ENCODE measurements at regions of chr7 and their contacts with region 1.

Region 1: GRCh38 chr7:76179686-76180085 is 22.0 kb upstream of the SRRM3 start:
- DNase-seq: no peak
- ATAC-seq: no peak
- H3K4me3 ChIP-seq: no peak overlapping the region
- H3K27ac ChIP-seq: no peak overlapping the region
- H3K4me1 ChIP-seq: no peaks in the 10 kb centered on the region
- H3K27me3 ChIP-seq: no peaks in the 10 kb centered on the region
- CTCF ChIP-seq: no peak

Region 2: GRCh38 chr7:76262683-76263402 is 83.2 kb after region 1 on chr7:
- intact Hi-C with region 1: loop called in 2 of 3 experiments (anchors 5 to 10 kb)
- DNase-seq: peak in 4 of 6 donors; percentile 48 to 66 (median 59)
- ATAC-seq: peak; percentile 73 to 90 (median 88)
- H3K4me3 ChIP-seq: no peak overlapping the region
- H3K27ac ChIP-seq: no peak overlapping the region
- H3K4me1 ChIP-seq: peaks cover 5 to 7% (median 5%) of the 10 kb centered on the region in 3 donors
- H3K27me3 ChIP-seq: peaks cover 0 to 11% (median 0%) of the 10 kb centered on the region in 4 donors
- CTCF ChIP-seq: peak in 3 of 4 donors; percentile 33 to 71 (median 66)

Region 3: GRCh38 chr7:76314042-76314721 is 134.5 kb after region 1 on chr7:
- intact Hi-C with region 1: loop called in 1 of 3 experiments (anchors 10 kb)
- DNase-seq: peak; percentile 93 to 99 (median 97)
- ATAC-seq: peak; percentile 51 to 78 (median 69)
- H3K4me3 ChIP-seq: no peak overlapping the region
- H3K27ac ChIP-seq: no peak overlapping the region
- H3K4me1 ChIP-seq: peaks cover 11 to 16% (median 13%) of the 10 kb centered on the region in 3 donors
- H3K27me3 ChIP-seq: no peaks in the 10 kb centered on the region
- CTCF ChIP-seq: peak; percentile 100

Measured in pancreas (tissue), 10 donors.